Activated naive CD4-positive, alpha-beta T cell treated with anti-CD3 and anti-CD28 coated beads for 36 hours (primary cell): ENCODE measurements at regions of chr3 and their contacts with region 1.

Region 1: GRCh38 chr3:121660356-121661171 is at the start of gene HCLS1:
- DNase-seq: peak; percentile 82
- H3K4me3 Mint-ChIP-seq: peak within 1 kb of the TSS; percentile 99
- H3K27ac Mint-ChIP-seq: peak within 1 kb of the TSS; percentile 100
- H3K4me1 Mint-ChIP-seq: peaks cover 53% of the 10 kb centered on the region
- H3K27me3 Mint-ChIP-seq: no peaks in the 10 kb centered on the region
- total RNA-seq, gene HCLS1: 240 to 248 TPM

Region 2: DNA sequence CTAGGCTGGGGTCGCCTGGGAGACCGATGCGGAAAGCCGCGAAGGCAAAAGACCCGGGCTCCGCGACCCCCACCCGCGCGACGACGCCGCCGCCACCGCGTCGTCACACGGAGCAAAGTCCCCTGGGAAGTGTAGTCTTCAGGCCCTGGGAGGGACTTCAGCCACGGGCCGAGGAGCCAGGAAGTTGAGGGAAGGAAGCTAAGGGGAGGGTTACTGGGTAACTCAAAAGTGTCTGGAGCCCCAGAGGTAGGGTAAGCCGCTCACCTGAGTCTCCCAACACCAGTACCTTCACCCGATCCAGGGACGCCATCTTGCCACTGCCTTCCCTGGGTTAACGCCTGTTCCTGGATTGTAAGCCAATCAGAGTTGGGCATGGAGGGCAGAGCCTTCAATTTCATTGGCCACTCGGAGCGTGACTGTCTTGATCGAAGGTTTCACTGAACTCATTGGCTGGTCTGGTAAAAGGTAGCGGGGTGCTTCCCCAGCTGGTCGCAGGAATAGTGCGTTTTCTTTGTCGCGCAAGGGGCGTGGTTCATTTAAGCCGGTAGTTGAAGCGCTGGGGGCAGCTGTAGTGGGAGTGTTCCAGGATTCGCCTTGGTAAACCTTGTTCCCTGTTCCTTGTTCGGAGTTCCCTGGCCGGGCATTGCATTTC is 918.2 kb before region 1 on chr3 and contains the starts of genes GTF2E1 and RABL3:
- CTCF ChIA-PET with region 1: no interaction called
- intact Hi-C with region 1: loop called (anchors 1 kb)
- DNase-seq: peak; percentile 98
- H3K4me3 Mint-ChIP-seq: peak within 1 kb of the TSS; percentile 90
- H3K27ac Mint-ChIP-seq: peak within 1 kb of the TSS; percentile 96
- H3K4me1 Mint-ChIP-seq: peaks cover 33% of the 10 kb centered on the region
- H3K27me3 Mint-ChIP-seq: no peaks in the 10 kb centered on the region
- total RNA-seq, gene GTF2E1: 13.2 TPM
- total RNA-seq, gene RABL3: 34.7 to 36.8 TPM

Region 3: GRCh38 chr3:121424549-121424948 is 236.0 kb before region 1 on chr3:
- CTCF ChIA-PET with region 1: no interaction called
- intact Hi-C with region 1: no loop called
- DNase-seq: no peak
- H3K4me3 Mint-ChIP-seq: no peak overlapping the region
- H3K27ac Mint-ChIP-seq: no peak overlapping the region
- H3K4me1 Mint-ChIP-seq: no peaks in the 10 kb centered on the region
- H3K27me3 Mint-ChIP-seq: no peaks in the 10 kb centered on the region

Region 4: GRCh38 chr3:121641127-121641526 is 19.4 kb before region 1 on chr3:
- CTCF ChIA-PET with region 1: no interaction called
- intact Hi-C with region 1: loop called (anchors 1 kb)
- DNase-seq: no peak
- H3K4me3 Mint-ChIP-seq: no peak overlapping the region
- H3K27ac Mint-ChIP-seq: peak overlapping the region; percentile 90
- H3K4me1 Mint-ChIP-seq: peaks cover 29% of the 10 kb centered on the region
- H3K27me3 Mint-ChIP-seq: no peaks in the 10 kb centered on the region

Region 5: DNA sequence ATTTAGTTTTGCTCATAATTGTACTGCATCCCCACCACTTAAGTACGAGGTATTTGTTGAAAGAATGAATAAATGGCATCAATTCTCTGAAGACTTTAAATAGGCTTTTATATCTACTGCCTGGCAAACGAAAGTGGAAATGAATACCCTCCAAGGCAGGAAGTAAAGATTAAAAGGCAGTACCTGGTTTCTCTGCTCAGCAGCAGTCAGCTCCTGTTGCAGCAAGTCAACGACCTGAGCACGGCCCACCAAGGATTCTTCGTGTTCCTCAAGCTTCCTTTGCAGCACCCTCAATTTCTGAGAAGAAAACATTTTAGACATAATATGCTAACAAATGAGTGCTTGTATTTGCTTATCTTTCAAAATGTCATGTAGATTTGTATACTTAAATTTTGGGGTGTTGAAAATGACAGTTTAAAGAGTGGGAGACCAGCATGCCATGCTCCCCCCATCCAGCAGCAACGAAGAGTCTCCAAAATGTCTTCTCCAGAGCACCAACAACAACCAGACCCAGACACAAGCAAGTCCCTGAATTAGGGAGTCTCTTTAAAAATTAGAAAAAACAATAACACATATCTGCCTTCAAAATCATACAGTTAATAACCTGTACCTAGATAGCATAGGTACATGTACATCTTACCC is 57.8 kb after region 1 on chr3:
- CTCF ChIA-PET with region 1: interaction called, 3 read pairs
- intact Hi-C with region 1: loop called (anchors 1 kb)
- DNase-seq: no peak
- H3K4me3 Mint-ChIP-seq: no peak overlapping the region
- H3K27ac Mint-ChIP-seq: peak overlapping the region; percentile 43
- H3K4me1 Mint-ChIP-seq: peaks cover 16% of the 10 kb centered on the region
- H3K27me3 Mint-ChIP-seq: no peaks in the 10 kb centered on the region

Region 6: GRCh38 chr3:121749276-121750086 is 88.9 kb after region 1 on chr3 and contains the start of gene GOLGB1:
- CTCF ChIA-PET with region 1: no interaction called
- intact Hi-C with region 1: loop called (anchors 1 kb)
- DNase-seq: peak; percentile 97
- H3K4me3 Mint-ChIP-seq: no peak within 1 kb of the TSS
- H3K27ac Mint-ChIP-seq: no peak within 1 kb of the TSS
- H3K4me1 Mint-ChIP-seq: peaks cover 5% of the 10 kb centered on the region
- H3K27me3 Mint-ChIP-seq: no peaks in the 10 kb centered on the region
- total RNA-seq, gene GOLGB1: 18.2 to 19.7 TPM

Region 7: GRCh38 chr3:122258757-122259371 is 598.3 kb after region 1 on chr3:
- CTCF ChIA-PET with region 1: no interaction called
- intact Hi-C with region 1: loop called (anchors 10 kb)
- DNase-seq: peak; percentile 85
- H3K4me3 Mint-ChIP-seq: no peak overlapping the region
- H3K27ac Mint-ChIP-seq: no peak overlapping the region
- H3K4me1 Mint-ChIP-seq: peaks cover 14% of the 10 kb centered on the region
- H3K27me3 Mint-ChIP-seq: peaks cover 10% of the 10 kb centered on the region

Region 8: DNA sequence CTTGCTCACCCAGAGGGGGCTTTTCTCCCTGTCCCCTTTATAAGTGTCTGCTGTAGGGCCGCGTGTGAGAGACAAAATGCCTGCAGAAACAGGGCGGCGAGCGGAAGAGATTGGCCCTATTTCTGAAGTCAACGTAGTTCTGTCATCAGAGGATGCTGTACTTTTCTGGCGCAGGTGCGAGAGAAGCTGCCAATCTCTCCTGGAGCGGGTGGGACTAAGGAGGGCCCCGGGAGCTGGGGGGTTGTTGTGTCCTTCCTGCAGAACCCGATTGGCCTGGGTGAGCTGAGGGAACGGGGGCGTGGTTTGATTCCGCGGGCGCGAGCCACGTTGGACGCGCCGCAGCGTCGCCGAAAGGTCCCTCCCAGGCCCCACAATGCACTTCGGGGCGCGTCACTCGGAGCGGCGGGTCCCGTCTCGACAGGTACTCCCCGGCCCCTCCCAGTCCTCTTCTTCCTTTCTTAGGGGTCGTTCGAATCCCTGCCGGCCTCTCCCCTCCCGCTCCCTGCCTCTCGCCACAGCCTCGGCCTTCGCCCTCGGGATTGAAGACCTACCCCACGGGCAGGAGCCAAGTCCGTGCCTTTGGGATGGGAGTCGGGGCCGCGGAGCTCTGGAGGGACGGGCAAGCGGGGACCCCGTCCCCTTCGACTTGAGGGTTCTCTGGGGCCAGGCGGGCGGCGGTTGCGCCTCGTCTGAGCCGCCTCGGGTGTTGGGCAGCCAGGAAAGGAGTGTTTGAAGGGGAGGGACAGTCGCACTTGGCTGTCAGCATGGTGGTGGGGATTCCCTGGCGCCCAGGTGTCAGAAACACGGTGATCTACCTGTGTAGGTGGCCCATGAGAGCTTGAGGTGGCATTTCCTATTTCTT is 1541.2 kb after region 1 on chr3 and contains the start of gene SEC22A:
- CTCF ChIA-PET with region 1: no interaction called
- intact Hi-C with region 1: loop called (anchors 10 kb)
- DNase-seq: peak; percentile 98
- H3K4me3 Mint-ChIP-seq: peak within 1 kb of the TSS; percentile 95
- H3K27ac Mint-ChIP-seq: peak within 1 kb of the TSS; percentile 95
- H3K4me1 Mint-ChIP-seq: peaks cover 27% of the 10 kb centered on the region
- H3K27me3 Mint-ChIP-seq: no peaks in the 10 kb centered on the region
- total RNA-seq, gene SEC22A: 14.3 to 18.7 TPM